Heart left ventricle (tissue), 16 donors: ENCODE measurements at regions of chr5 and their contacts with region 1.

Region 1: DNA sequence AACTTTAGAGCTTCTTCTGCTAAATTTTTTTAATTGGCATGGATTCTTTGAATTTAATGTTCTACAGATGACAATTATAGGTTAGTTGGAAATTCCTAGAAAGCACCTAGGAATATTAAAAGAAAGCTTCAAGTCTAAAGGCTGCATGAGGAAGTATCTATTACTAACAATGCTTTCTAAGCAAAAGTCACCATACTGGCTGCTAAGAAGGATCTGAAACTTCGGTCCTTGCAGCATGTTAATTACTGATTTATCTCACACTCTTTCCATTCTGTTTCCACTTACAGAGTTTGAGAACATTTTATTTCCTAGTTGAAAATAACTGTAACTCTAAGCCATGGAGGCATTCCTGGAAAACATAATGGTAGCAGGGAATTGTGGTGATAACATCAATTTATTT is 8.4 kb downstream of the SEMA6A start:
- DNase-seq: no peak
- ATAC-seq: no peak
- H3K4me3 ChIP-seq: no peak overlapping the region
- H3K27ac ChIP-seq: no peak overlapping the region
- H3K4me1 ChIP-seq: peaks cover 0 to 24% (median 13%) of the 10 kb centered on the region in 12 donors
- H3K27me3 ChIP-seq: peaks cover 0 to 16% (median 0%) of the 10 kb centered on the region in 9 donors
- CTCF ChIP-seq: no peak
- POLR2A ChIP-seq: no peak

Region 2: DNA sequence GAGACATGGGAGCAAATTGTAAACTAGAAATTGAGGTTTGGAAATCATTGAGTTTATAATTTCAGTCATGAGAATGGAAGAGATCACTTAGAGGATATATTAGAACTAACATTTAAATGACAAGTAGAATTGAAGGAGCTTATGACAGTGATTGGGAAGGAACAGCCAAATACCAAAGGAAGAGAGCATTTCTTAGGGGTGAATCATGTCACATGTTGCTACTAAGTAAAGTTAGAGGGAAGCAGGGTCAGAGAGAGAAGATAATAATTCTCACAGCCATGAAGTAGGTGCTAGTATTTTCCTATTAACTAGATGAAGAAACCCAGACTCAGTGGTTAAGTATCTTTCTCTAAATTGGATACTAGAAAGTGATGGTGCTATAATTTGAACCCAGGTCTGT is 422.1 kb before region 1 on chr5:
- intact Hi-C with region 1: loop called in 8 of 10 experiments (anchors 5 to 10 kb)
- DNase-seq: no peak
- ATAC-seq: no peak
- H3K4me3 ChIP-seq: no peak overlapping the region
- H3K27ac ChIP-seq: no peak overlapping the region
- H3K4me1 ChIP-seq: peaks cover 0 to 4% (median 0%) of the 10 kb centered on the region in 12 donors
- H3K27me3 ChIP-seq: no peaks in the 10 kb centered on the region
- CTCF ChIP-seq: no peak
- POLR2A ChIP-seq: no peak

Region 3: DNA sequence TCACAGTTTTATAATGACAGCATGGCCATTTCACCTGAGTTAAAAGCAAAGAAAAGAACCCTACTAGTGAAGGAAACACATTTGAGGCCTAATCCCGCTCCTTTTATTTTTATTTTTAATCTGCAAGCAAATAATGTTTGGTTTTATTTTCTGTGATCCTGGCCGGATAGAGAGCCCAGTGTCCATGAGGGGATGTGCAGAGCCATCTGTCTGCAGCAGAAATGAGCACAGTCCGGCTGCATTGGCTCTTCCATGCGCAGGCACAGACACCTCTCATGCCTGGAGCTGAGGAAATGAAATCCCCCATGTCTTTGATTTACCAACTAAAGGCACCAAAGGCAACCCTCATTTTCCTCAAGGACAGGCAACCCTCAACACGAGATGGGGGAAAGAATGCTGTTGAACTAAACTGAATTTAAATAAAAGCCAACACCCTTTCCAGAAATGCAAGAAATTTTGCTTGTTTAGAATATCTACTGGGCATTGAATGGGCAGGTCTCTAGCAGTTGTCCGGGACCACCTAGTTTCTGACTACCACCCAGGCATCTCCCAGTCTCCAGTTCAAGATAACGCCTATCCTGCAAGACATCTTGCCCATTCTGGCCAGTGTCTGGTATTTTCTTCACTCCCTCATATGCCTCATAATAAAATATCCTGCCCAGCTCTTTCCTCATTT is 56.3 kb after region 1 on chr5:
- intact Hi-C with region 1: no loop called
- DNase-seq: no peak
- ATAC-seq: no peak
- H3K4me3 ChIP-seq: no peak overlapping the region
- H3K27ac ChIP-seq: no peak overlapping the region
- H3K4me1 ChIP-seq: peaks cover 0 to 21% (median 7%) of the 10 kb centered on the region in 12 donors
- H3K27me3 ChIP-seq: no peaks in the 10 kb centered on the region
- CTCF ChIP-seq: no peak
- POLR2A ChIP-seq: no peak

Region 4: GRCh38 chr5:116848954-116849581 is 282.8 kb after region 1 on chr5:
- intact Hi-C with region 1: no loop called
- DNase-seq: no peak
- ATAC-seq: no peak
- H3K4me3 ChIP-seq: no peak overlapping the region
- H3K27ac ChIP-seq: no peak overlapping the region
- H3K4me1 ChIP-seq: no peaks in the 10 kb centered on the region
- H3K27me3 ChIP-seq: no peaks in the 10 kb centered on the region
- CTCF ChIP-seq: no peak
- POLR2A ChIP-seq: no peak